Head of caudate nucleus (tissue), 42 donors: ENCODE measurements at regions of chr5 and their contacts with region 1.

Region 1: DNA sequence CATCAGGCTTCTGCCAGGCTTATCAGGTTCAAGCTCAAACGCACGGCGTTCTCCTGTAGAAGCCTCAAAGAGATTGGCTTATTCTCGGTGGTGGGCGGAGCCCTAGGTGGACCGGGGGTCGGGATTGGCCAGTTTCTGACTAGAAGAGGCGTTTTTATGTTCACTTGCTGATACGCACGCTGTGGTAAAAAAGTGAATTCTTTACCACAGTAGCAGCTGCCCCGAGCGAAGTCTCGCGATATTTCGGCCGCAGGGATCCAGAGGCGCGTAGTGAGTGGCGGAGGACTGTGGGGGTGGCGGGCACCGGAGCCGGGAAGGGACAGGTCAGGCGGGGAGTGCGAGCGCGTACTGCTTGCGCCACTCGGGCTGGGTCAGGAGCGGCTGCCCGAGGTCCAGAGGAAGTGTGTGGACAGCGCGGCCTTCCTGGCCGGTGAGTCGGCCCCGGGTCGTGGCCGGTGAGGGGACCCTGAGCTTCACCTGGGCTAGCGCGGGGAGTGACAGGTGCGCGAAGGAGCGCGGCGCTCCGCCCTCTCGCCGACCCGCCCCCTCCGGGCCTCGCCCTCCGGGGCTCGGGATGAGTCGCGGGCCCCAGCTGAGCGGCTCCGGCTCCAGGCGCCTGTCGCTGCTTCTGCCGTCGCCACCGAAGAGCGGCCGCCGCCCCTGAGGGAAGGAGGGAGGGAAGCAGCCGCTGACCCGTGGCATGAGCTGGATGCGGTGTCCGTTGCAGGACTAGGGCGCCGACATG is at the start of gene DMXL1:
- DNase-seq: peak; percentile 97 to 100 (median 99)

Region 2: DNA sequence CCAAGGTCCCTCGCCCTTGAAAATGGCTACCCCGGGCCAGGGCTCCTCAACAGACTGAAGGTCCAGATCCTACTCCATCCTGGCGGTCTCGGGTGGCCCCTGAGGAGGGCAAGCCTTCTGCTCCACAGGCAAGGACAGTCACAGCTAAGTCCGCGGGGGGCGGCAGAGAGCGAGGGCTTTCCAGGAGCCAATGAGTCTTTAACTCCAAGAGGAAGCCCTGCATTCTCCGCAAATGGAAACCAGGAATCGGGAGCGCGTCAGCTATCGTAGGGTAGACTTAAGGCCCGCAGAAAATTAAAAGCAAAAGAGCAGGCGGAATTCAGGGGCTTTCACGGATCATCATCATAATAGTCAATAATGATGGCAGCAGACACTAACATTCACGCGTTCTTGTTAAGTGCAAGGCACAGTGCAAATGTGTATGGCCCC is 197.0 kb after region 1 on chr5:
- intact Hi-C with region 1: loop called (anchors 10 kb)
- DNase-seq: peak; percentile 77 to 97 (median 91)